HEK293T (cell line): ENCODE measurements at regions of chrX and their contacts with region 1.

Region 1: GRCh38 chrX:41096339-41096955 is 11.2 kb downstream of the USP9X start:
- DNase-seq: no peak

Region 2: GRCh38 chrX:41076738-41077137 is 19.7 kb before region 1 on chrX:
- CTCF ChIA-PET with region 1: no interaction called
- POLR2A ChIA-PET with region 1: no interaction called
- DNase-seq: no peak

Region 3: DNA sequence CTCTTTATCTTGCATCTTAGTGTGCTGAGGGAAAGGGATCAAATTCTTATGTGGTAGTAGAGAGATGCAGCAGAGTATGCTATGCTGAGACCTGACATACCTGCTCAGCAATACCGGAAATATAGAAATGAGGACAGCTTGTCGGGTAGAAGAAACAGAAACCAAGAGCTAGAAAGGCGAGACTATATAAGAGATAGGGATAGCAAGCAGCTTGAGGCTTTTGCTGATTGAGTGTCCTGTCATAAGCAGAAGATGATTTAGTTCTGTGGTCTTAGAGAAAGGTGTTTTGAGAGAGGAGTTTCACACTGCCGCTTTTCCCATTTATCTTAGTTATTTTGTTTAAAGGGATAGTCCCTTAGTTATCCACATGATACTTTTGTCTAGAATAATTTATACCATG is 20.5 kb after region 1 on chrX:
- CTCF ChIA-PET with region 1: interaction called, 13 read pairs
- POLR2A ChIA-PET with region 1: interaction called, 3 read pairs
- DNase-seq: no peak